ENCODE measurements at regions of chr12 and their contacts with region 1.

Region 1: GRCh38 chr12:52069327-52070184 is at the start of gene ATG101:
- DNase-seq: peak; percentile 95
- H3K4me3 Mint-ChIP-seq: peak within 1 kb of the TSS; percentile 96
- H3K27ac Mint-ChIP-seq: peak within 1 kb of the TSS; percentile 99
- H3K4me1 Mint-ChIP-seq: peaks cover 22% of the 10 kb centered on the region
- H3K27me3 Mint-ChIP-seq: peaks cover 20% of the 10 kb centered on the region
- CTCF ChIP-seq: peak; percentile 41
- total RNA-seq, gene ATG101: 64.2 and 66.9 TPM in 2 replicates

Region 2: GRCh38 chr12:51984657-51985056 is 84.9 kb before region 1 on chr12:
- CTCF ChIA-PET with region 1: no interaction called
- POLR2A ChIA-PET with region 1: no interaction called
- intact Hi-C with region 1: no loop called
- DNase-seq: no peak
- H3K4me3 Mint-ChIP-seq: no peak overlapping the region
- H3K27ac Mint-ChIP-seq: no peak overlapping the region
- H3K4me1 Mint-ChIP-seq: no peaks in the 10 kb centered on the region
- H3K27me3 Mint-ChIP-seq: no peaks in the 10 kb centered on the region
- CTCF ChIP-seq: no peak

Region 3: DNA sequence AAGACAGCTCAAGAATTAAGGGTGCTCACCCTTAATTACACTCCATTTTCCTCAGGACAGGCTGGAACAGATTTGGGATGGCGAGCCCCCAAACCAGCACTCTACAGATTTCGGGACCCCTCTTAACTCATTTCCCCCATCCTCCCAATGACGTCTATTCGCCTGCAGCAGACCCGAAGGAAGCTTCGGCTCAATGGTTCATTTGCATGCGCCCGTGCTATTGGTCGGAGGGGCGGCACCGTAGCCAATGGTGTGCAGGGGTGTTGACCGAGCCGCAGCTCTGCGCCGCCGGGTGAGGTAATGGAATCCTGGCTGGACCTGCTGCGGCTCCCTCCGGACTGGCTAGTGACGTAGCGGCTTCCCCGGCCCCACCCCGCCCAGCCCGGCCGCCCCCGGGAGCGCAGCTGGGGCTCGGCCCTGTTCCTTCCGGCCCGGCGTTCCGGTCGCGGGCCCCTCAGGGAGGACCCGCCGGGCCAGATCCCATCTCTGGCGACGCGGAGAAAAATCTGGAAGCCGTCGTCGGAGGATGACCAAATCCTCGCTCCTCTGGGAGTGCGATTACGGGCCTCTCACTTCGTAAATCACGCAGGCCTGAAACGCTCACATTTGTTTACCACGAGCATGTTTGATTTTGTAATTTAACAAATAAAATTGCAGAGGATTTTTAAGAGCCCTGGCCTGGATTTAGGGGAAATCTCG is 36.6 kb before region 1 on chr12:
- CTCF ChIA-PET with region 1: interaction called, 560 read pairs
- POLR2A ChIA-PET with region 1: interaction called, 36 read pairs
- intact Hi-C with region 1: no loop called
- DNase-seq: peak; percentile 95
- H3K4me3 Mint-ChIP-seq: peak overlapping the region; percentile 71
- H3K27ac Mint-ChIP-seq: peak overlapping the region; percentile 83
- H3K4me1 Mint-ChIP-seq: peaks cover 10% of the 10 kb centered on the region
- H3K27me3 Mint-ChIP-seq: peaks cover 10% of the 10 kb centered on the region
- CTCF ChIP-seq: no peak

Region 4: DNA sequence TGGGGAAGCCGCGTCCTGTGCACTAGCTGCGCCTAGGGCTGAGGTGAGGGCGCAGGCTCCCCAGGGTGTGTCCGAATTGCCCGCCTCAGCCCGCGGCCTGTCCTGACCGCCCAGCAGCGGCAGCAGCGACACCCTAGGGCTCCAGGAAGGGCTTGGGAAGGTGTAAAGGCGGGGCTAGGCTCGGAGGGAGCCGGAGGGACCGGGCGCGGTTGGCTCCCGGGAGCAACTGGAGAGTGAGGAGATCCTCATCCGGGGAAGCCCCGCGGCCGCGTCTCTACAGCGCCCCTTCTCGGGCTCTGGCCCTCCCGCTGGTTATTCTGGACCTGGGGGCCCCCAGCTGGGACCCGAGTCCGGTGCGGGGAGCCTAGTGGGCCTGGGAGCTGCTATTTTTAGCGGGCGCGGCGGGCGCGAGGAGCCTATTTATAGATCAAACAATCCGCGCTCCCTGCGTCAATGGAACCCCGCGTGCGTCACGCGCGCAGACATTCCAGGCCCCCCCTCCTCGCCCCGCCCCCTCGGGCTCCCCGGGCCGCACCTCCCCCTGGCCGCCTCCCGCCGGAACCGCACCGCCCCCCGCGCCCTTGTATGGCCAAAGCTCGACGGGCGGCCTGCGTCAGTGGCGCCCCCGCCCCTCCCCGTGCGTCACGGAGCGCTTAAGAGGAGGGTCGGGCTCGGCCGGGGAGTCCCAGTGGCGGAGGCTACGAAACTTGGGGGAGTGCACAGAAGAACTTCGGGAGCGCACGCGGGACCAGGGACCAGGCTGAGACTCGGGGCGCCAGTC is 18.6 kb before region 1 on chr12 and contains the start of gene NR4A1:
- CTCF ChIA-PET with region 1: interaction called, 6 read pairs
- POLR2A ChIA-PET with region 1: interaction called, 49 read pairs
- intact Hi-C with region 1: no loop called
- DNase-seq: peak; percentile 92
- H3K4me3 Mint-ChIP-seq: peak within 1 kb of the TSS; percentile 75
- H3K27ac Mint-ChIP-seq: peak within 1 kb of the TSS; percentile 95
- H3K4me1 Mint-ChIP-seq: peaks cover 22% of the 10 kb centered on the region
- H3K27me3 Mint-ChIP-seq: peaks cover 11% of the 10 kb centered on the region
- CTCF ChIP-seq: no peak
- total RNA-seq, gene NR4A1: 0.69 and 2.9 TPM in 2 replicates

Region 5: GRCh38 chr12:52082988-52083637 is 13.6 kb after region 1 on chr12:
- CTCF ChIA-PET with region 1: interaction called, 20 read pairs
- POLR2A ChIA-PET with region 1: interaction called, 6 read pairs
- intact Hi-C with region 1: no loop called
- DNase-seq: peak; percentile 54
- H3K4me3 Mint-ChIP-seq: no peak overlapping the region
- H3K27ac Mint-ChIP-seq: no peak overlapping the region
- H3K4me1 Mint-ChIP-seq: peaks cover 14% of the 10 kb centered on the region
- H3K27me3 Mint-ChIP-seq: peaks cover 28% of the 10 kb centered on the region
- CTCF ChIP-seq: peak; percentile 95

Region 6: GRCh38 chr12:52156736-52157565 is 87.4 kb after region 1 on chr12:
- CTCF ChIA-PET with region 1: no interaction called
- POLR2A ChIA-PET with region 1: no interaction called
- intact Hi-C with region 1: no loop called
- DNase-seq: peak; percentile 85
- H3K4me3 Mint-ChIP-seq: no peak overlapping the region
- H3K27ac Mint-ChIP-seq: peak overlapping the region; percentile 91
- H3K4me1 Mint-ChIP-seq: peaks cover 30% of the 10 kb centered on the region
- H3K27me3 Mint-ChIP-seq: no peaks in the 10 kb centered on the region
- CTCF ChIP-seq: peak; percentile 98

Measured in MCF 10A (cell line).